Activated CD4-positive, alpha-beta memory T cell treated with anti-CD3 and anti-CD28 coated beads, Interleukin-2, amount 10 ng/mL, durations not matched to agents 7 days and 5 days (primary cell): ENCODE measurements at regions of chr4 and their contacts with region 1.

Region 1: DNA sequence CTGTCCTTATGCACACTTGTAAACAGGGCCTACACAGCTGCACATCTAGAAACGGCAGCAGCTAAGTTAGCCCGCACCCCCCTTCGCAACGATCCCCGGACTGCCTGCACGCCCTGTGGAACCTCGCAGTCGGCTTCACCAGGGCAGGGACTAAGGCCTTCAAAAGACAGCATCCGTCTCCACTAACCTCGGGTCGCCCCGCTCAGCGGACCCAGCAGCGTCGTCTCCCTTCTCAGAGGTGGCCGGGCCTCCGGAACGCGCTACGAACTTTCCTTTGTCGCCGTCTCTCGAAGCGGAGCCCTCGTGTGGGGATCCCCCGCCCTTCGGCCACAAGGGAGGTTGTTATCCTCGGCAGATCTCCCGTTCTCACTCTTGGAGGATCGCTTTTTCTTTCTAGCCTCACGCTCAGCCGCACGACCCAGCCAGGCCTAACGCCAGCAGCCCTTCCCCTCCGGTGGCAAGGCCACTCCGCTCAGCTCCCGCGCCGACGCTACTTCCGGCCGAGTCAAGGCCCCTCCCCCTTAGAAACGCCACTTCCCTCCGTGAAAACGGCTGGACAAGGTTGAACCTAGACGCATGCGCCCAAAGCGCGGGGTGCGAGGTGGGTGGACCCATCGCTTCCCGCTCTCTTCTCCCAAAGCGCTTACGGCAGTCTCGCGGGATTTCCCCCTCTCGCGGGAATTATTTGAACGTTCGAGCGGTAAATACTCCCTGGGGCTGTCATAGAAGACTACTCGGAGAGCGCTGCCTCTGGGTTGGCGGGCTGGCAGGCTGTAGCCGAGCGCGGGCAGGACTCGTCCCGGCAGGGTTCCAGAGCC is at the starts of genes DCAF16 and NCAPG:
- DNase-seq: peak; percentile 99
- H3K4me3 Mint-ChIP-seq: peak within 1 kb of the TSS; percentile 91
- H3K27ac Mint-ChIP-seq: peak within 1 kb of the TSS; percentile 96
- H3K4me1 Mint-ChIP-seq: peaks cover 57% of the 10 kb centered on the region
- H3K27me3 Mint-ChIP-seq: no peaks in the 10 kb centered on the region
- total RNA-seq, gene DCAF16: 41.7 to 42.0 TPM
- total RNA-seq, gene NCAPG: 77.7 to 82.3 TPM

Region 2: GRCh38 chr4:17544205-17544604 is 266.3 kb before region 1 on chr4:
- CTCF ChIA-PET with region 1: interaction called, 44 read pairs
- POLR2A ChIA-PET with region 1: interaction called, 14 read pairs
- DNase-seq: no peak
- H3K4me3 Mint-ChIP-seq: no peak overlapping the region
- H3K27ac Mint-ChIP-seq: no peak overlapping the region
- H3K4me1 Mint-ChIP-seq: peaks cover 4% of the 10 kb centered on the region
- H3K27me3 Mint-ChIP-seq: peaks cover 26% of the 10 kb centered on the region

Region 3: DNA sequence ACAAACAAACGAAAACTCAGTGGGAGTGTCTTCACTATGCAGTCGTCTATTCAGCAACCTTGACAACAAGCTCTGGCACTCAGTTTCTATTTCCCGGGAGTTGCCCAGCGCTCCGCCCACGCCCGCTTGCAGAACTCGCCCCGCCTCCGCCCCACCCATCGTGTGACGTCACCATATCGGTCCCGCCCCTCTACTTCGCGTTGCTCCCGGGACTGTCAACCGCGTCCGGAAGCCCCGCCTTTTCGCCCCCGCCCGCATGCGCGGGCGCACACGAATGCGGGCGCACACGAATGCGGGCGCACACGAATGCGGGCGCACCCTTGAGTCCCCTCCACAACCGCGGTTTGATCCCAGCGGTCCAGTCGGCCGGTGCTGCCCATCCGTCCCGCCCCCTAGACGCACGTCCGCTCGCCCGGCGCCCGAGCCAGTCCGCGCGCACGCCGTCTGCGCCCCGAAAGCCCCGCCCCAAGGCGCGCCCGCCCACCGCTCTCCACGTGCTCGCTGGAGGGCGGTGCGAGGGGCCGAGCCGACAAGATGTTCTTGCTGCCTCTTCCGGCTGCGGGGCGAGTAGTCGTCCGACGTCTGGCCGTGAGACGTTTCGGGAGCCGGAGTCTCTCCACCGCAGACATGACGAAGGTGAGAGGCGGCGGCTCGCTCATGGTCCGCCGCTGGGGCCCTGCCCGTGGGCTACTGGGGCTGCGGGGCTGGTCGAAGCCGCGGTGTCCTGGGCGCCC is 233.4 kb before region 1 on chr4 and contains the start of gene LAP3:
- CTCF ChIA-PET with region 1: interaction called, 8 read pairs
- POLR2A ChIA-PET with region 1: interaction called, 76 read pairs
- DNase-seq: peak; percentile 99
- H3K4me3 Mint-ChIP-seq: peak within 1 kb of the TSS; percentile 97
- H3K27ac Mint-ChIP-seq: peak within 1 kb of the TSS; percentile 99
- H3K4me1 Mint-ChIP-seq: peaks cover 43% of the 10 kb centered on the region
- H3K27me3 Mint-ChIP-seq: no peaks in the 10 kb centered on the region
- total RNA-seq, gene LAP3: 180 to 182 TPM

Region 4: GRCh38 chr4:17797808-17798207 is 12.7 kb before region 1 on chr4:
- CTCF ChIA-PET with region 1: interaction called, 25 read pairs
- POLR2A ChIA-PET with region 1: interaction called, 22 read pairs
- DNase-seq: no peak
- H3K4me3 Mint-ChIP-seq: no peak overlapping the region
- H3K27ac Mint-ChIP-seq: peak overlapping the region; percentile 35
- H3K4me1 Mint-ChIP-seq: peaks cover 11% of the 10 kb centered on the region
- H3K27me3 Mint-ChIP-seq: no peaks in the 10 kb centered on the region

Region 5: GRCh38 chr4:17884063-17884462 is 73.6 kb after region 1 on chr4:
- CTCF ChIA-PET with region 1: no interaction called
- POLR2A ChIA-PET with region 1: no interaction called
- DNase-seq: no peak
- H3K4me3 Mint-ChIP-seq: no peak overlapping the region
- H3K27ac Mint-ChIP-seq: no peak overlapping the region
- H3K4me1 Mint-ChIP-seq: no peaks in the 10 kb centered on the region
- H3K27me3 Mint-ChIP-seq: no peaks in the 10 kb centered on the region

Region 6: DNA sequence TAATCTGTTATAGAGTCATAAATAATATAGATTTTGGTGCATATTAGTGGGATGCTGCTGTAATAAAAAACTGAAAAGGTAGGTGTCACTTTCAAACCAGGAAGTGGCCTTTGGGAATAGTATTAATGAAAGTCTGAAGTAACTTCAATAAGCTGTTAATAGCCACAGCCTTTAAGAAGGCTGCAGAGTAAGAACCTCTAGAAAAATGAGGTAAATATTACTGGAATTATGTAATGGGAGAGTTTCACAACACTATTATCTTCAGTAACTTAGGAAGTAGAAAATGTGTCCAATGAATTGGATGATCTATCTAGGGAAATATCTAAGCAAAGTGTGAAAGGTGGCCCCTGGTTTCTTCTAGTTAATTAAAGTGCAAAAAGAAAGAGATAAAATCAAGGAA is 105.0 kb after region 1 on chr4:
- CTCF ChIA-PET with region 1: no interaction called
- POLR2A ChIA-PET with region 1: no interaction called
- DNase-seq: no peak
- H3K4me3 Mint-ChIP-seq: no peak overlapping the region
- H3K27ac Mint-ChIP-seq: no peak overlapping the region
- H3K4me1 Mint-ChIP-seq: no peaks in the 10 kb centered on the region
- H3K27me3 Mint-ChIP-seq: no peaks in the 10 kb centered on the region

Region 7: DNA sequence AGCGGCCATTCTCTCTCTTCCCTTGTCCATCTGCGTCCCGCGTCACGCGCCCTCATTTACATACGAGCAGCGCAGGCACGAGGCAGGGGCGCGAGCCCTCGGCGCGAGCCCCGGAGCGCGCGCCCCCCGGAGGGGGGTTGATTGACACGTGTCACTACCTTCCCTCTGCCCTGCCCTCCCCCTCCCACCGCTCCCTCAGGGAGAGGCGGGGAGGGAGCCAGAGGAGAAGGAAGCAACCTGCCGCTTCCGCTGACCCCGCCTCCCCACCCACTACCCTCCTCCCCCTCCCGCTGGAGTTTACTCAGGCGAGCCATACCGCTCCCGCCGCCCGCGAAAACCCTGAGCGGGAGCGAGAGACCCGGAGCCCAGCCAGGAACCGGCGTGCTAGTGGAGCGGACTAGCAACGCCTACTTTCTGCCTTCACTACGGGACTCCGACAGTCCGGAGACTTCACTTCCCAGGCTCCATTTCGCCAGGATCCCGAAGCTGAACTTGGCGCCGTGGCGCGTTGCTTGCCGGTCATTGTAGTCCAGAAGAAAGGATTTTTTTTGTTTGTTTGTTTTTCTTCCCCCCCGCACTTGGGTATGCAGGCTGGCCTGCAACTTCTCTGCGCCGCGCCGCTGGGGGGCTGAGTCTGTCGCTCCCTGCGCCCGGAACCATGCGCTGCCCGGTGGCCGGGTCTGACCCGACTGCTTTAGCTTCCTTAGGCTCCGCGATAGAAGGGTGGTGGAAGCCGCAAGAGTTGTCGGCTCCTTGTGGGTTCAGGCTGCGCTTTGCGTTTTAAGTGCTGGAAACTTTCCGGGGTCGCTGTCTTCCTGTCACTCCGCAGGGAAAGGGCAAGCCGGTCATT is 211.5 kb after region 1 on chr4 and contains the start of gene LCORL:
- CTCF ChIA-PET with region 1: no interaction called
- POLR2A ChIA-PET with region 1: interaction called, 10 read pairs
- DNase-seq: peak; percentile 90
- H3K4me3 Mint-ChIP-seq: peak within 1 kb of the TSS; percentile 93
- H3K27ac Mint-ChIP-seq: peak within 1 kb of the TSS; percentile 85
- H3K4me1 Mint-ChIP-seq: peaks cover 24% of the 10 kb centered on the region
- H3K27me3 Mint-ChIP-seq: peaks cover 55% of the 10 kb centered on the region
- total RNA-seq, gene LCORL: 15.7 to 17.3 TPM